AG04450 (cell line): ENCODE measurements at regions of chr1 and their contacts with region 1.

Region 1: DNA sequence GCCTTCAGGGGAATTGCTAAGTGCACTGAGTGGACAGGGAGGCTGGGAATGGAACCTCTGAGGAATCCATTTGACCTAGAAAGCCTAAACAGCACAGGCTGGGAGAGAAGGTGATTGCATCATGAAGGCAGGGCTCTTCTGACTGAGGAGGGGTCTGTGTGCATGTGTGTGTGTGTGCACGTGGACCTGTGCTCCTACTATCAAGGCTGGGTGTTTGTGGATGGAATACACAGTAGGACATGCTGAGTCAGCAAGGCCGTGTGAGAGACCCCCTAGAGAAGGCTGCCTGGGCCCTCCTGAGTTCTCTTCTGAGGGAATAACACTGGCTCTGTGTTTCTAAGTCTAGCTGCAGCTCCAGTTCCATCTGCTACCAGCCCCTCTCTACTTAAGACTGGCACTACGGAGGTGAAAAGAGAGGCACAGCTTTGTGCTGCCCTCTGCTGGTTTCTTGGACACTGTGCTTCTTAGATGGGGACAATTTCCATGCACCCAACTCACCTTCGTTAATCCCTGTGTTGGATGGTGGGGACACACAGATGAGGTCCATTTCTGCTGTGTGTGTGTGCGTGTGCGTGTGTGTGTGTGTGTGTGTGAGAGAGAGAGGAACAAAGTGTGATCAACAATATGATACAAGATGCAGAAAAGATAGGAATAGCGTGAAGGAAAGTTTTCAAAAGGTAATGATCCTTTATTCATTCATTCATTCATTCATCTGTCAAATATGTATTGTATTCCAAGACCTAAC is 6.2 kb upstream of the EFCAB14 start:
- DNase-seq: peak; percentile 67
- H3K4me3 ChIP-seq: no peak overlapping the region
- H3K27ac ChIP-seq: no peak overlapping the region
- H3K27me3 ChIP-seq: peaks cover 11% of the 10 kb centered on the region
- CTCF ChIP-seq: peak; percentile 92

Region 2: GRCh38 chr1:46406881-46407608 is 318.1 kb before region 1 on chr1:
- CTCF ChIA-PET with region 1: interaction called, 14 read pairs
- POLR2A ChIA-PET with region 1: no interaction called
- DNase-seq: no peak
- H3K4me3 ChIP-seq: 0 out of 2 replicates have a peak overlapping the region, but pooled peaks have one; percentile 17
- H3K27ac ChIP-seq: no peak overlapping the region
- H3K27me3 ChIP-seq: peaks cover 16% of the 10 kb centered on the region
- CTCF ChIP-seq: no peak

Region 3: GRCh38 chr1:46446646-46447498 is 278.3 kb before region 1 on chr1:
- CTCF ChIA-PET with region 1: interaction called, 10 read pairs
- POLR2A ChIA-PET with region 1: no interaction called
- DNase-seq: peak; percentile 10
- H3K4me3 ChIP-seq: no peak overlapping the region
- H3K27ac ChIP-seq: no peak overlapping the region
- H3K27me3 ChIP-seq: peaks cover 68% of the 10 kb centered on the region
- CTCF ChIP-seq: peak; percentile 87

Region 4: DNA sequence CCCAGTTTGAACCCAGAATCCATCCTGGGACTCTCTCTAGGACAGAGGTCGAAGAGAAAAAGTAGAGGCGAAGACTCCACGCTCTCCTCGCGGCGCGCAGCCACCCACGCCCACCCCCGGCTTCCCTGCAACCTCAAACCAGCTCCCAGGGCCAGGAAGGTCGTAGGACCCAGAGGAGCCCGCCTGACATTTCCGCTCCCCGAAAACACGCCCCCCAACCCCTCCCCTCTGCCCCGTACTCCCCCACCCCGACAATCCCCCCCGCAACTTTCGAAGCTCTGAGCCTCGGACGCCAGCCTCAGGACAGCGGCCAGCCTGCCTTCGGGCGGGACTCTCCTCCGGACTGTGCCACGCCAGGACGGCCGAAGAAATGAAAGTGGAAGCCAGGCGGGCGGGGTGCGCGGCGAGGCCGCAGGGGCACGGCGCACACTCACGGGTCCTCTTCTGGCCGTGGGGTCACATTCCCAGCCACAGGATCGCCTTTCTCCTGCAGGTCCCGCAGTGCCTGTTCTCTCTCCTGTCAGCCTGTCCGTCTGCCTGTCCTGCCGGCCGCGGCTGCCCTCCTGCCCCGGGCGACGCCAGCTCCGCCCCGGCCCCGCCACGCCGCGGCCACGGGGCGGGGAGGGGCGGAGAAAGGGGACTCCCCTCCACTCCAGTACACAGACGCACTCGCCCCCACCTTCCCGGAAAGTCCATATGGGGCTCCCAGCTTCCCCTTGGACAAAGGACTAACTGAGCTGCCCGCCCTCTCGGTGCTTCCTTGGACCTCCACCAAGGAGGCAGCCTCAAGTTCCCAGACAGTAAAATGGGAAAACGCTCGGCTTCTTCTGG is 108.7 kb before region 1 on chr1 and contains the start of gene MOB3C:
- CTCF ChIA-PET with region 1: interaction called, 54 read pairs
- POLR2A ChIA-PET with region 1: interaction called, 9 read pairs
- DNase-seq: peak; percentile 55
- H3K4me3 ChIP-seq: peak within 1 kb of the TSS; percentile 89
- H3K27ac ChIP-seq: peak within 1 kb of the TSS; percentile 81
- H3K27me3 ChIP-seq: no peaks in the 10 kb centered on the region
- CTCF ChIP-seq: no peak
- polyA plus RNA-seq, gene MOB3C: 11.9 and 13.0 TPM in 2 replicates

Region 5: DNA sequence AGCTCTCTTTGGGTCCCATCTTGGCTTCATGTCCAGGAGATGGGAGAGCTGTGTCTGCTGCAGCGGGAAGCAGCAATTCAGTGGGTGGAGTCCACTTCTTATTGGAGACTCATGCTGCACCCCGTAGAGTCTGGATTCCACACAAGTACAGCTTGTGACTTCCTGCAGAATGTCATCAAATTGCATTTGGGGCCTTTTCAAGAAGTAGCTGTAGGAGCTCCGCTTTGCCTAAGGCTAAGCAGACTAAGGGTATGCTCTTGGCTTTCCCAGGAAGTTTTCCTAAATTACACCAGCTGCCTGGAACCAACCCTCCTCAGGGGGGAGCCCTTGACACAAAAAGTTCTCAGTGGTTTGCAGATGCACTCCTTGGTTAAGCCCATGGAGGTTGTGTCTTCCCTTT is 102.8 kb before region 1 on chr1:
- CTCF ChIA-PET with region 1: interaction called, 54 read pairs
- POLR2A ChIA-PET with region 1: interaction called, 9 read pairs
- DNase-seq: no peak
- H3K4me3 ChIP-seq: no peak overlapping the region
- H3K27ac ChIP-seq: no peak overlapping the region
- H3K27me3 ChIP-seq: peaks cover 5% of the 10 kb centered on the region
- CTCF ChIP-seq: peak; percentile 52

Region 6: DNA sequence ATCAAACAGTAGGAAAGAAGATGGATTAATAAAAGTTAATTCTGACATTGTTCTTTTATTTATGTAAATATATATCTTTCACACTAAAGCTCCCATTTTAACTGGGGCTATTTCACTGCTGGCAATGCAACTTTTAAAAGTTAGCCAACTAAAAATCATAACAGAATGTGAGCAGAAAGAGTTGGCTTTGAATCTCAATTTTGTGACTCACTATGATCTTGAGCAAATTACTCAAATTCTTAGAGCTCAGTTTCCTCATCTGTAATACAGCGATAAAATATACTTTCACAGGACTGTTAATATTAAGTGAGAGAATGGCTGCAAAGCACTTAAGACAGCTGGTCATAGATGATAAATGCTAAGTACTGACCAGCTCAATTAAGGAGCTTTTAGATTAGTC is 17.0 kb before region 1 on chr1:
- CTCF ChIA-PET with region 1: interaction called, 13 read pairs
- POLR2A ChIA-PET with region 1: no interaction called
- DNase-seq: no peak
- H3K4me3 ChIP-seq: no peak overlapping the region
- H3K27ac ChIP-seq: no peak overlapping the region
- H3K27me3 ChIP-seq: no peaks in the 10 kb centered on the region
- CTCF ChIP-seq: no peak

Region 7: GRCh38 chr1:46735708-46736324 is 10.7 kb after region 1 on chr1:
- CTCF ChIA-PET with region 1: interaction called, 15 read pairs
- POLR2A ChIA-PET with region 1: no interaction called
- DNase-seq: peak; percentile 27
- H3K4me3 ChIP-seq: no peak overlapping the region
- H3K27ac ChIP-seq: no peak overlapping the region
- H3K27me3 ChIP-seq: no peaks in the 10 kb centered on the region
- CTCF ChIP-seq: peak; percentile 52